ENCODE measurements at regions of chr11 and their contacts with region 1.

Region 1: GRCh38 chr11:31817054-31817620 is 6.0 kb upstream of the PAX6 start:
- DNase-seq: no peak
- ATAC-seq: no peak
- H3K4me3 Mint-ChIP-seq: peak overlapping the region; percentile 48
- H3K27ac Mint-ChIP-seq: no peak overlapping the region
- H3K4me1 Mint-ChIP-seq: peaks cover 30% of the 10 kb centered on the region
- H3K27me3 Mint-ChIP-seq: peaks cover 60% of the 10 kb centered on the region
- CTCF ChIP-seq: no peak

Region 2: DNA sequence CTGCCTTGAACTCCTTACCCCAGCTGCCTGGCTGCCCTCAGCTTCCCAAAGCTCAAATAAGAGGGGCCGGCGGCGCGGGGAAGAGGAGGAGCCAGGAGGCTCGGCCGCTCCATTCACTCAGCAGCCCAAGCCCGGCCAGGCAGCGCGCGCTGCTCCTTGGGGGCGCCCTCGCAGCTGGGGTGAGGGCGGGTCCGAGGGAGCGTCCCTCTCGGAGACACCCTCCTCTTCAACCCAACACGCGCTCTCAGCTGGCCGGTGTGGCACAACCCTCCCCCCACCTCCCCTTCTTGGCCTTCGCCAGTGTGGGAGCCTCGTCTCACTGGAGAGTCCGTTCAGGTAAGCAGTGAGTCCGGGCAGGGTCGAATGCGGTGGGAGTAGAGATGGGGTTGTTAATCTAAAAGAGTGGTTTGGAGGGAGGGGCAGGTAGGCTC is 618.4 kb after region 1 on chr11 and contains the start of gene WT1:
- CTCF ChIA-PET with region 1: no interaction called
- POLR2A ChIA-PET with region 1: no interaction called
- intact Hi-C with region 1: loop called (anchors 5 kb)
- DNase-seq: no peak
- ATAC-seq: no peak
- H3K4me3 Mint-ChIP-seq: peak within 1 kb of the TSS; percentile 5
- H3K27ac Mint-ChIP-seq: no peak within 1 kb of the TSS
- H3K4me1 Mint-ChIP-seq: peaks cover 16% of the 10 kb centered on the region
- H3K27me3 Mint-ChIP-seq: peaks cover 66% of the 10 kb centered on the region
- CTCF ChIP-seq: no peak
- total RNA-seq, gene WT1: not detected in 2 replicates